Head of caudate nucleus (tissue), 42 donors: ENCODE measurements at regions of chr7 and their contacts with region 1.

Region 1: DNA sequence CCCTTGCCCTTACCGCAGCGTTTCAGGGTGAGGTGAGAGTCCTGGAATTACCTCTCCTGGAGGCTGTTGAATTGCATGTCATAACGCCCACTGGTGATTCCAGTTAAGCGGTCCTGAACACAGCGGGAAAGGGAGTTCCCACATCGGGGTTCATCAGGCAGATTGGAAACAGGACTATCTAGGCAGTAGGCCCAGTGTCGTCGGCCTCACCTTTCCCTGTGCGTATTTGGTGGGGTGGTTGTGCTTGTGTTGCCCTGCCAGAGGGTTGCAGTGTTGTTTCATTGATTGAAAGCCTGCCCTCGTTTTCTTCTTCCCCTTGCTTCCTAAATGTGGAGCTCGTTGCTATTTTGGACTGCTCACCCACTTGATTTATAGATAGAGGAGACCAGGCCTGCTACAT is 10.6 kb upstream of the SUN1 start:
- DNase-seq: peak in 11 of 42 donors; percentile 24 to 60 (median 47)

Region 2: GRCh38 chr7:665736-666453 is 155.8 kb before region 1 on chr7:
- intact Hi-C with region 1: no loop called
- DNase-seq: peak in 23 of 42 donors; percentile 10 to 60 (median 28)

Region 3: GRCh38 chr7:859359-860030 is 37.8 kb after region 1 on chr7:
- intact Hi-C with region 1: loop called (anchors 5 kb)
- DNase-seq: no peak

Region 4: GRCh38 chr7:1123715-1124114 is 302.0 kb after region 1 on chr7:
- intact Hi-C with region 1: no loop called
- DNase-seq: peak; percentile 55 to 92 (median 80)